ENCODE measurements at regions of chr9 and their contacts with region 1.

Region 1: GRCh38 chr9:125241000-125241862 is at the start of gene HSPA5:
- DNase-seq: peak; percentile 94 to 100 (median 99)
- ATAC-seq: peak; percentile 94
- H3K4me3 ChIP-seq: peak within 1 kb of the TSS; percentile 85
- H3K4me3 Mint-ChIP-seq: peak within 1 kb of the TSS; percentile 94 to 99 (median 98)
- H3K27ac ChIP-seq: peak within 1 kb of the TSS; percentile 97
- H3K27ac Mint-ChIP-seq: peak within 1 kb of the TSS; percentile 96 to 100 (median 99)
- H3K4me1 ChIP-seq: peaks cover 39 to 48% of the 10 kb centered on the region in 2 donors
- H3K4me1 Mint-ChIP-seq: peaks cover 27 to 49% (median 45%) of the 10 kb centered on the region in 7 donors
- H3K27me3 ChIP-seq: no peaks in the 10 kb centered on the region
- H3K27me3 Mint-ChIP-seq: peaks cover 0 to 5% (median 0%) of the 10 kb centered on the region in 5 donors
- total RNA-seq, gene HSPA5: 127 to 248 (median 155) TPM

Region 2: GRCh38 chr9:124861342-124862229 is 379.6 kb before region 1 on chr9 and contains the starts of genes ARPC5L and RPL35:
- CTCF ChIA-PET with region 1: no interaction called
- POLR2A ChIA-PET with region 1: interaction called, 4 read pairs
- intact Hi-C with region 1: loop called in 1 of 2 experiments (anchors 1 kb)
- DNase-seq: peak; percentile 91 to 97 (median 95)
- ATAC-seq: peak; percentile 98
- H3K4me3 ChIP-seq: peak within 1 kb of the TSS; percentile 88
- H3K4me3 Mint-ChIP-seq: peak within 1 kb of the TSS; percentile 89 to 99 (median 95)
- H3K27ac ChIP-seq: peak within 1 kb of the TSS; percentile 87
- H3K27ac Mint-ChIP-seq: peak within 1 kb of the TSS; percentile 91 to 99 (median 96)
- H3K4me1 ChIP-seq: peaks cover 7 to 16% of the 10 kb centered on the region in 2 donors
- H3K4me1 Mint-ChIP-seq: peaks cover 7 to 36% (median 29%) of the 10 kb centered on the region in 7 donors
- H3K27me3 ChIP-seq: no peaks in the 10 kb centered on the region
- H3K27me3 Mint-ChIP-seq: no peaks in the 10 kb centered on the region
- total RNA-seq, gene ARPC5L: 20.0 to 66.1 (median 33.1) TPM
- total RNA-seq, gene RPL35: 1,415 to 1,987 (median 1,778) TPM

Region 3: DNA sequence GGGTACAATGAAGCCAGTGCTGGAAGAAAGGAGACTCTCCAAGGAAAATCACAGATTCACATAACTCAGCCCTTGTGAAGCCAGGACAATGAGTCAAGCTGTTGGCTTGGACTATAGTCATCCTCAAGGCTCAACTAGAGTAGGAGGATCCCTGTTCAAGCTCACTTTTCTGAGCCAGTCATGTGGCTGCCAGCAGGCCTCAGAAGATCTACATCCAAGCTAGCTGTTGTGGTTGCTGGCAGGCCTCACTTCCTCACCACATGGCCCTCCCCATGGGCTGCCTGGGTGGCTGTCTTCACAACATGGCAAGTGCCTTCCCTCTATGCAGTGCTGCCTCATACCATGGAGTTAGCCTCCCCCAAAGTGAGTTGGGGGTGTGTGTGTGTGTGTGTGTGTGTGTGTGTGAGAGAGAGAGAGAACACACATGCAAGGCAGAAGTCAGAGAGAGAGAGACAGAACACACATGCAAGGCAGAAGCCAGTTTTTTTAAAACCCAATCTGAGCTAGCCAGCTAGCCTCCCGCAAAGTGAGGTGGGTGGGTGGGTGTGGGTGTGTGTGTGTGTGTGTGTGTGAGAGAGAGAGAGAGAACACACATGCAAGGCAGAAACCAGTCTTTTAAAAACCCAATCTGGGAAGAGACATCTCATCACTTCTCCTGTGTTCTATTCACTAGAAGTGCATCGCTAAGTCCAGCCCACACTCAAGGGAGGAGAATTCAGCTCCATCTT is 115.0 kb before region 1 on chr9:
- CTCF ChIA-PET with region 1: no interaction called
- POLR2A ChIA-PET with region 1: interaction called, 7 read pairs
- intact Hi-C with region 1: loop called in 1 of 2 experiments (anchors 2 kb)
- DNase-seq: peak; percentile 55 to 93 (median 88)
- ATAC-seq: peak; percentile 100
- H3K4me3 ChIP-seq: no peak overlapping the region
- H3K4me3 Mint-ChIP-seq: peak overlapping the region; percentile 67 to 87 (median 82)
- H3K27ac ChIP-seq: peak overlapping the region; percentile 27
- H3K27ac Mint-ChIP-seq: peak overlapping the region; percentile 84 to 98 (median 96)
- H3K4me1 ChIP-seq: peaks cover 18 to 36% of the 10 kb centered on the region in 2 donors
- H3K4me1 Mint-ChIP-seq: peaks cover 29 to 57% (median 38%) of the 10 kb centered on the region in 7 donors
- H3K27me3 ChIP-seq: no peaks in the 10 kb centered on the region
- H3K27me3 Mint-ChIP-seq: no peaks in the 10 kb centered on the region

Region 4: DNA sequence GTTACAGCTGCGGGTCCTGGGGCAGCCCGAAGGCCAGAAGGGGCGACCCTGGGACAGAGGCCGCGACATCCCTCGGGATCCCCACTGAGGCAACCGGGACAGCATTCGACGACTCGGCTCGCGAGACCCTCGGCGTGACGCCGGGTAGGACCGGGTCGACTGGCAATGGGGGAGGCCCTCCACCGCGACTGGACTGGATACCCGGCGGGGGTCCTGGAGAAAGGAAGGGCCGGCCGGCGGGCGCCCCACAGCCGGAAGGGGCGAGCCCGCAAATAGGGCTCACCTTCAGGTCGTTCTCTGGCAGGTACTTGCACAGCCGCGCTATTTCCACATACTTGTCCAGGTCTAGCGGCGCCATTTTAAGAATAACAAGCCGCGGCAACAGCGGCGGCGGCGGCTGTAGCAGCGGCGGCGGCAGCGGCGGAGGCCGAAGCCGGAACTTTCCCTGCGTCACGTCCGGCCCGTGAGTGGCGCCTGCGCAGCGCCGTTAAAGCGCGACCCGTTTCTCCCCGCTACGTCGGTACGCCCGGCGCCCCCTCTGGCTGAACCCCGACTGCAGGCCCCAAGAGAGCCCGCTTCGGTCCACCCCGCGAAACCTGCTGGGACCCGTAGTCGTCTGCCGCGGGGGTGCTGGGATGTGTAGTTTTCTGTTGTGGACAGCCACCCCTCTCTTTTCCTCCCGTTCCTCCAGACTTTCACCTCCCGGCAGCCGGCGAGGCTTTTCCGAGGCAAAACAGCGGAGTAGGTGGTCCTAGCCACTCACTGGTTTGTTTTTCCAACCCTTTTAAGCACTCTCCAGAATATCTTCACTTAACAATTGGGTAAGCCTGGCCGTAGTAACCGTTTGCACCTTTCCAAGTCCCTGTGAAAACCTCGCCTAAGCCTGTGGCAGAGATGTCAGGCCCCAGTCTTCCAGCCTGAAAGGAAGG is 51.6 kb before region 1 on chr9 and contains the start of gene PPP6C:
- CTCF ChIA-PET with region 1: interaction called, 3 read pairs
- POLR2A ChIA-PET with region 1: interaction called, 192 read pairs
- intact Hi-C with region 1: loop called (anchors 1 kb)
- DNase-seq: peak; percentile 92 to 97 (median 96)
- ATAC-seq: peak; percentile 98
- H3K4me3 ChIP-seq: peak within 1 kb of the TSS; percentile 99
- H3K4me3 Mint-ChIP-seq: peak within 1 kb of the TSS; percentile 89 to 99 (median 96)
- H3K27ac ChIP-seq: peak within 1 kb of the TSS; percentile 98
- H3K27ac Mint-ChIP-seq: peak within 1 kb of the TSS; percentile 90 to 97 (median 95)
- H3K4me1 ChIP-seq: peaks cover 35 to 51% of the 10 kb centered on the region in 2 donors
- H3K4me1 Mint-ChIP-seq: peaks cover 35 to 79% (median 57%) of the 10 kb centered on the region in 7 donors
- H3K27me3 ChIP-seq: no peaks in the 10 kb centered on the region
- H3K27me3 Mint-ChIP-seq: peaks cover 0 to 4% (median 0%) of the 10 kb centered on the region in 5 donors
- total RNA-seq, gene PPP6C: 32.9 to 54.2 (median 49.5) TPM

Region 5: DNA sequence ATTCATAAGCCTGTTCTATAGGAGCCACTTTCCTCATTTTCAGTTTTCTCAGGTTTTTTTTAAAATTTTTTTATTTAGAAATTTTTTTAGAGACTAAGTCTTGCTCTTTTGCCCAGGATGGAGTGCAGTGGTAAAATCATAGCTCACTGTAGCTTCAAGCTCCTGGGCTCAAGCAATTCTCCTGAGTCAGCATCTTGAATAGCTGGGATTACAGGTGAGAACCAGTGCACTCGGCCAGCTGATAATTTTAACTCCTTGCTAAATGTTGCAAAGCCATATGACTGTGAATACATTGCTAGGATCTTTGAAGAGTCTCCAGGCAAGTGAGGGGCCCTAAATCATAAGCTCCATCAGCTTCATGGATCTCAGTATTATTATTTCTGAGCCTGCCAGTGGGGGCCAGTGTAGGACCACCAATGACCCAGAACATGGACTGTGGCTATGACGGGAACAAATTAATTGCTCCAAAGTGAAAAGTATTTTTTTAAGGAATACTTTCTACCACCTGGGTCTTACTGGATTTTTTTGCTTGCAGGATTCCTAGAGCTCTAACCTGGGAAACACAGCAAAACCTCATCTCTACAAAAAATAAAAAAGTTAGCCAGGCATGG is 14.7 kb after region 1 on chr9:
- CTCF ChIA-PET with region 1: no interaction called
- POLR2A ChIA-PET with region 1: interaction called, 53 read pairs
- intact Hi-C with region 1: loop called (anchors 1 kb)
- DNase-seq: no peak
- ATAC-seq: no peak
- H3K4me3 ChIP-seq: no peak overlapping the region
- H3K4me3 Mint-ChIP-seq: no peak overlapping the region
- H3K27ac ChIP-seq: no peak overlapping the region
- H3K27ac Mint-ChIP-seq: no peak overlapping the region
- H3K4me1 ChIP-seq: no peaks in the 10 kb centered on the region
- H3K4me1 Mint-ChIP-seq: peaks cover 0 to 6% (median 2%) of the 10 kb centered on the region in 7 donors
- H3K27me3 ChIP-seq: no peaks in the 10 kb centered on the region
- H3K27me3 Mint-ChIP-seq: peaks cover 0 to 2% (median 0%) of the 10 kb centered on the region in 5 donors

Region 6: DNA sequence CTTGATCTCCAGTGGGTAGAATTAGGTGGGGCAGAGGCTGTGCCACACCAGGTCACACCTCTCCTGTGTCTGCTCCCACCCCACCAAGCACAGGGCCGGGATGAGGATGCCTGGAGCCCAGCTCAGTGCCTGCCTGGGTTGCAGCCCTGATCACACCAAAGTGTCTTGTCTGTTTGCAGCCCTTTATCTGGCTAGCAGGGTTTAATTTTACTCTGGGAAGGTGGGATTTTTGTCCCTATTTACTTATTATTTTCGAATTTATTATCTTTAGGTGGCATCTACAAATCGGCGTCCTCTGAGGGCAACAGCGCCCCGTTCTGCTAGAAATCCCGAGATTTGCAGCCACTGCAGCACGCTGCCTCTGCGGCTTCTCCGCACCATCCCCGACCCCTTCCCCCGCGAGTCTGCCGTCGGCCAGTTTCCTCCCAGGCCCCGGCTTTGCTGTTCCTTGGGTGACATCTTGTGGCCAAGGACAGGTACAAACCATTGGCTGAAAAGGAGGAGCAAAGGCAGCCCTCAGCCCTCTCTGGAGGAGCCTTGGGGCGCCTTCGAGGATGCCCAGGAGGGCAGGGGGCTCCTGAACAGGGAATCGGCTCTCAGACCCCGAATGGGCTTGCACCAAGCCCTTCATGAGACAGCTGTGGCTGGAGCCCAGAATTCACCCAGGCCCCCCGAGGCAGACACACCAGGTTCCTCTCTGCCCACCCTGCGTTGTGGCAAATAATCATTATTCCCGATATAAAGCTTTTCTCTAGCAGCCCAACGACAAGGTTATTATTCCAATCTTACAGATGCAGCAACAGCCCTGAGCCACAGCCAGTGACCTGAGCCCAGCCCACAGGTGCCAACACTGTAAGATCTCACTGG is 133.4 kb after region 1 on chr9:
- CTCF ChIA-PET with region 1: no interaction called
- POLR2A ChIA-PET with region 1: no interaction called
- intact Hi-C with region 1: loop called in 1 of 2 experiments (anchors 5 kb)
- DNase-seq: peak; percentile 37 to 74 (median 64)
- ATAC-seq: peak; percentile 86
- H3K4me3 ChIP-seq: peak overlapping the region; percentile 46
- H3K4me3 Mint-ChIP-seq: peak overlapping the region in 8 of 10 donors; percentile 36 to 76 (median 64)
- H3K27ac ChIP-seq: no peak overlapping the region
- H3K27ac Mint-ChIP-seq: peak overlapping the region in 1 of 9 donors; percentile 55
- H3K4me1 ChIP-seq: peaks cover 0 to 9% of the 10 kb centered on the region in 2 donors
- H3K4me1 Mint-ChIP-seq: peaks cover 5 to 10% (median 6%) of the 10 kb centered on the region in 7 donors
- H3K27me3 ChIP-seq: no peaks in the 10 kb centered on the region
- H3K27me3 Mint-ChIP-seq: peaks cover 0 to 8% (median 2%) of the 10 kb centered on the region in 5 donors

Measured in naive thymus-derived CD4-positive, alpha-beta T cell (primary cell).